T-cell (primary cell): ENCODE measurements at regions of chr3 and their contacts with region 1.

Region 1: DNA sequence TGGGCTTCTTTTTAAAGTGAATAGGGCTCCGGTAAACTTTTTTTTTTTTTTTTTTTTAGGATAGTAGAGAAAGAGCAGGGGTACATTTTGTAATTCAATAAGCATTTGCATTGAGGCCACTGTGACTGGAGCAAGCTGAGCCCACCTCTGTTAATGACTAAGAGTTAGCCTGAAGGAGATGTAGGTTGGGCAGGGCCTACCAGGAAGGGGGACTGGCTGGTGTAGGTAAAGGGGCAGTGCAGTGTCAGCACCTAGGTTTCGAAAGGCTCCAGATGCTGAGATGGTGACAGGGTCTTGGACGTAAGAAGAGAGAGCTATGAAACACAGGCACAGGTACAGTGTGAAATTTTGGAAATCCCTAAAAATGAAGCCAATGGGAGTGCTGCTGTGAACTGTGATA is 30.7 kb downstream of the LPP start:
- DNase-seq: no peak
- ATAC-seq: no peak
- H3K4me3 ChIP-seq: no peak overlapping the region
- H3K4me3 Mint-ChIP-seq: no peak overlapping the region
- H3K27ac ChIP-seq: no peak overlapping the region
- H3K27ac Mint-ChIP-seq: peak overlapping the region in 1 of 2 donors; percentile 6
- H3K4me1 ChIP-seq: peaks cover 8 to 12% of the 10 kb centered on the region in 2 experiments
- H3K4me1 Mint-ChIP-seq: peaks cover 39 to 53% (median 48%) of the 10 kb centered on the region in 3 donors
- H3K27me3 ChIP-seq: no peaks in the 10 kb centered on the region
- H3K27me3 Mint-ChIP-seq: no peaks in the 10 kb centered on the region

Region 2: DNA sequence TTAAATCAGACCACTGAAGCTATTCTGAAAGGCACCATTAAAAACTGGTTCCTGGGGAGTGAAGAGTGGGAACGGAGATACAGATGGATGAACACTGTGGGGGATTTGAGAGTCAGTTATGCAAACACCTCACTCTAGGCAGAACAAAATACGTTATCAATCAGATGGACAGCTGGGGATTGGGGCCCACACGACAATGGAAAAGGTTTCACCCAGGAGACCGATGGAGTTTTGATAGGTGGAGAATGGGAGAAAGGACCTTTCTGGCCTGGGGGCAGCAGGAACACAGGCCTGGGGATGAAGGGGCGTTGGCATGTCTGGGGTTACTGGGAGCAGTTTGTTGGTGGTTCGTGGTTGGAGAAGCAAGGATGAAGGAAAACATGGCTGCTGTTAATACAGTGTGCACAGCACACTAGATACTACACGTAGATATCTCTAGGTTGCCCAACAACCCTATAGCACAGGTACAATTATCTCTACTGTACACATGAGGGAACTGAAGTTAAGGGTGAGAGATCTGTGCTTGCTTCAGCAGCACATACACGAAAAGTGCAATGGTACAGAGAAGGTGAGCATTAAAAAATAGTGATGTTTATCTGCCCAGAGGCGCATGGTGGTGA is 1237.8 kb before region 1 on chr3:
- CTCF ChIA-PET with region 1: no interaction called
- POLR2A ChIA-PET with region 1: no interaction called
- DNase-seq: no peak
- ATAC-seq: no peak
- H3K4me3 ChIP-seq: no peak overlapping the region
- H3K4me3 Mint-ChIP-seq: no peak overlapping the region
- H3K27ac ChIP-seq: no peak overlapping the region
- H3K27ac Mint-ChIP-seq: peak overlapping the region in 1 of 2 donors; percentile 62
- H3K4me1 ChIP-seq: peaks cover 0 to 38% of the 10 kb centered on the region in 2 experiments
- H3K4me1 Mint-ChIP-seq: peaks cover 54 to 76% (median 70%) of the 10 kb centered on the region in 3 donors
- H3K27me3 ChIP-seq: no peaks in the 10 kb centered on the region
- H3K27me3 Mint-ChIP-seq: no peaks in the 10 kb centered on the region

Region 3: DNA sequence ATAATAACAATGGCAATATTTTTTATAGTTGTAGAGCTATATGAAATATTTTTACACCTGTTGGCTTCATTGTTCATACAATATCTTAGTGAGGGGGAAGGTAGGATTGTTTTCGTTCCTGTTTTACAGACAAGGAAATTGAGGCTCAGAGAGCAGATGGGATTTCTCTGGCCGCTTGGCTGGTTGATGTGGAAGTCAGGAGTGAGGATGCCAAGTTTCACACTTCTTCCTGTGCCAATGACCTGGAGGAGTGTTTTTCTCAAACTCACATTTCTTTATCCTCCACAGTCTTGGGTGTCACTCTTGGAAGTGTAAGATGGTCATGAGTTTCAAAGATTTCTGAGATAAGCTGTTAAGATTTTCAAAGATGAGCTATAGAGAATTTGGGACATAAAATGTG is 19.9 kb after region 1 on chr3:
- CTCF ChIA-PET with region 1: interaction called in 1 of 2 experiments, 10 read pairs
- POLR2A ChIA-PET with region 1: no interaction called
- DNase-seq: no peak
- ATAC-seq: no peak
- H3K4me3 ChIP-seq: no peak overlapping the region
- H3K4me3 Mint-ChIP-seq: no peak overlapping the region
- H3K27ac ChIP-seq: no peak overlapping the region
- H3K27ac Mint-ChIP-seq: no peak overlapping the region
- H3K4me1 ChIP-seq: no peaks in the 10 kb centered on the region
- H3K4me1 Mint-ChIP-seq: peaks cover 10 to 26% (median 12%) of the 10 kb centered on the region in 3 donors
- H3K27me3 ChIP-seq: no peaks in the 10 kb centered on the region
- H3K27me3 Mint-ChIP-seq: no peaks in the 10 kb centered on the region

Region 4: DNA sequence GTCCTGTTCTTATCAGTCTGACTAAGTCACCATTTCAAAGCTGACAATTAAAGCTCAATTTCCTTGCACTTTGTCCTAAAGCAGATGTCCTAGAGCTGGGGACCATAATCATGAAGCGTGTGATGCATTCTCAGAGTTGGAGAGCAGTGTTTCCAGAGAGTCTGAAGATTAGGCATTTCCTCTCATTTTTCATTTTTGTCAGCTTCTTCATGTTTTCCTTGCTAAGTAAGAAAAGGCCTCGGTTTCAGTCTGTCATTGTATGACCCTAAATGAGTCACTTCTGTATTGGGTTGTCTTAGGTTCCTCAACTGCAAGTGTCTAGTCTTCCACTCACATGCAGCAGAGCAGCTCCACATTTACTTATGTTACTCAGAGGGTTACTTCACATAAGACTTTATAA is 729.9 kb after region 1 on chr3:
- CTCF ChIA-PET with region 1: no interaction called
- POLR2A ChIA-PET with region 1: interaction called in 1 of 2 experiments, 10 read pairs
- DNase-seq: no peak
- ATAC-seq: no peak
- H3K4me3 ChIP-seq: no peak overlapping the region
- H3K4me3 Mint-ChIP-seq: no peak overlapping the region
- H3K27ac ChIP-seq: no peak overlapping the region
- H3K27ac Mint-ChIP-seq: no peak overlapping the region
- H3K4me1 ChIP-seq: peaks cover 14 to 16% of the 10 kb centered on the region in 2 experiments
- H3K4me1 Mint-ChIP-seq: peaks cover 23 to 40% (median 38%) of the 10 kb centered on the region in 3 donors
- H3K27me3 ChIP-seq: no peaks in the 10 kb centered on the region
- H3K27me3 Mint-ChIP-seq: no peaks in the 10 kb centered on the region